ENCODE measurements at regions of chr14 and their contacts with region 1.

Region 1: DNA sequence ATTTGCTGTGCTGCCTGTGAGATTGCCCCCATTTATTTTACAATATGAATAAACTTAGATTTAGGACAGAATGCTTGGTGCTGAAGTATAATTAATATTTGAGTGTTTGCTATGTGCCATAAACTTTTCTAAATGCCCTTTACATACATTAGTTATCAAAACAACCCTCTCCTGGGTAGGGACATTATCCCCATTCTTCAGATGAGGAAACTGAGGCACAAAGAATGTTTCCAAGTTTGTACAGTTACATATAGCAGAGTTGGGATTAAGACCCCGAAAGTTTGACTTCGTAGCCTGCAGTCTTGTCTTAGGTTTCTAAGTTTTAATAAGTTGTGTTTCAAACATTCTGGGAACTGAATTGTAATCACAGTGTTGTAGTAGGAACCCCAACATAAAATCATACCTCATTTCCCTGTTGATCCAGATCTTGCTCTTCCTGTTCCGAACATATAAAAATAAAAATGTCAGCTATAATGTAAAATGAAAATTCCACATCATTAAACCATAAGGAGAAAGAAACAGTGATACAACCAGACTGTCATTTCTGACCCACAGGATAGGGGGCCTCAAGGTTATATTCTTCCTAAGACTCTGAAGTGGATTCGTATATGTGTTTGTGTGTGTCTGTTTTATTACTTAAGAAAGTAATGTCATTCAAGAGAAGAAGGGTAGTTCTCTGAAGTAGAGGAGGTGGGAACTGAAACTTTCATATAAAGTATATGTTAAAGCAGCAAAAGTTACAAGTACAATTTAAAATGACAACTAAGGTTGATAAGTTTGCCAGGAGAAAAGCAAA is 18.6 kb downstream of the KLHDC2 start:
- DNase-seq: no peak
- H3K4me3 ChIP-seq: no peak overlapping the region
- H3K27ac ChIP-seq: no peak overlapping the region
- H3K4me1 ChIP-seq: no peaks in the 10 kb centered on the region
- H3K27me3 ChIP-seq: no peaks in the 10 kb centered on the region
- CTCF ChIP-seq: no peak
- POLR2A ChIP-seq: no peak

Region 2: DNA sequence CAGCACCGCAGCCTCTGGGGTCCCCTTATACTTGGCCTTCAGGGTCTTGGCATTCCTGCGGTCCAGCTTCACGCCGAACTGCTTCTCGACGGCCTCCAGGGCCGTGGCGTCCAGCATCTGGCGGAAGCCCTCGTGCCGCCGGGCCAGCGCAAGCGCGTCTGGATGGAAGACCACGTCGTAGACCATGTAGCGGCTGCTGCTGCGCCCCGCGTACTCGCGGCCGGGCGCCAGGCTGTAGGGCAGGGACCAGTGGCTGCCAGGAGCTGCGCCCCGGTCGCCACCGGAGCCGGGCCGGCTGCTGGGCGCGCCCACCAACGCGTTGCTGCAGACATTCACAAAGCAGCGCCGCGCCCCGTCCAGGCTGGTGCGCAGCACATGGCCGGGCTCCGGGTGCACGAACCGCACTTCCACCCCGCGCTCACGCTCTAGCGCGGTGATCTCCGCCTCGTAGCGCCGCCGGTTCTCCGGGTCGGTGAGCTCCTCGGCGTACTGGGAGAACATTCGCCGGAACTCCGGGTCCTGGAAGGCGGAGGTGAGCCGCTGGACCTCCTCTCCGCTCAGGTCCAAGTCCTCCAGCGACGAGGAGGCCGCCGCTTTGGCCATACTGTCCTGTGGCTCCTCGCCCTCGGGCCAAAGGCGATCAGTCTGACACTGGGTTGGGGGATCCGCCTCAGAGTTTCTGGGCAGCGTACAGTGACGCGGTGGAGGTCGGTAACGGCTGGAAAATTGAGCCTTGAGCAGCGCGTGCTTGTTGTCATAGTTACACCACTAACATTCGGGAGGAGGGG is 151.8 kb before region 1 on chr14 and contains the start of gene DNAAF2:
- intact Hi-C with region 1: loop called (anchors 5 kb)
- DNase-seq: peak; percentile 51 to 64
- H3K4me3 ChIP-seq: peak within 1 kb of the TSS; percentile 85 to 95
- H3K27ac ChIP-seq: peak within 1 kb of the TSS; percentile 95 to 97
- H3K4me1 ChIP-seq: peaks cover 0 to 6% of the 10 kb centered on the region in 2 donors
- H3K27me3 ChIP-seq: no peaks in the 10 kb centered on the region
- CTCF ChIP-seq: no peak
- POLR2A ChIP-seq: no peak
- total RNA-seq, gene DNAAF2: 3.8 to 18.9 (median 8.8) TPM

Region 3: DNA sequence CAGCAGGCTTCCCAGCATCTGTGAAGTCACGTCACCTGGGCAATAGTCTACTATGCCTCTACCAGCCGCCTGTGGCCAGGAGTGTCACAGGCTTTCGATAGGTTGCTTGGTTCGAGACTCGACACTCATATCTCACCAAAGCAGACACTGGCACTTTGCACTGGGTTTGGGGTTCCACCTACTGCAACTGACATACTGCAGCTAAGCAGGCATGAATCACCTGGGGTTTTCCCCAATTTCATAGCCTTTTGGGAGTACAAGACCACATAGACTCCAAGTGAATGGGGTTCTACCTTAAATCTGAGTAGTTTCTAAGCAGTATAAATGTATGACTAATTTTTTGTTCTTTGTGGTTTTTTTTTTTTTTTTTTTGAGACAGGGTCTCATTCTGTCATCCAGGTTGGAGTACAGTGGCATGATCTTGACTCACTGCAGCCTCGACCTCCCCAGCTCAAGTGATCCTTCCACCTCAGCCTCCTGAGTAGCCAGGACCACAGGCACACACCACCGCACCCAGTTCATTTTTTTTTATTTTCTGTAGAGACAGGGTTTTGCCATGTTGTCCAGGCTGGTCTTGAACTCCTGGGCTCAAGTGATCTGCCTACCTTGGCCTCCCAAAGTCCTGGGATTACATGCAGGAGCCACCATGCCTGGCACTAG is 557.7 kb after region 1 on chr14:
- intact Hi-C with region 1: no loop called
- DNase-seq: no peak
- H3K4me3 ChIP-seq: no peak overlapping the region
- H3K27ac ChIP-seq: peak overlapping the region; percentile 64 to 96
- H3K4me1 ChIP-seq: peaks cover 9 to 26% of the 10 kb centered on the region in 2 donors
- H3K27me3 ChIP-seq: no peaks in the 10 kb centered on the region
- CTCF ChIP-seq: no peak
- POLR2A ChIP-seq: no peak